ENCODE measurements at regions of chr16 and their contacts with region 1.

Region 1: GRCh38 chr16:2500918-2501750 is 12.6 kb upstream of the ATP6V0C start:
- DNase-seq: peak; percentile 84
- H3K4me3 Mint-ChIP-seq: no peak overlapping the region
- H3K27ac Mint-ChIP-seq: no peak overlapping the region
- H3K4me1 Mint-ChIP-seq: peaks cover 2% of the 10 kb centered on the region
- H3K27me3 Mint-ChIP-seq: no peaks in the 10 kb centered on the region

Region 2: DNA sequence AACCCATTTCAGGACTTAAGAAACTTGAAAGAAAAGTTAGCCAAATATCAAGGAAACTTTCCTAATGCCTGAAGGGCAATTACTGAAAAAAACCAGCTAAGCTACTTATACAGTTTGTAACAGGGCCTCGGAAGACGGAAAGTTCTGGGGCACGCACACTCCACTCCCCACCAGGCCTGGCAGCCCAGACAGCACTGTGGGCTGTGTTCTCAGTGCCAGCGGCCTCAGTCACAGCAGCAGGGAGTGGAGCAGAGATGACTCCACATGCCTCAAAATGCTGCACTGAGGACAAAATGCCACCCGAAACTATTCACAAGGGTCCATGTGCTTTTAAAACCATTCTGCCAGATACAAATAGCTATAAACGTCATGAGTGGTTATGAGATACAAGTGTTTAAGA is 243.4 kb before region 1 on chr16:
- CTCF ChIA-PET with region 1: no interaction called
- intact Hi-C with region 1: no loop called
- DNase-seq: no peak
- H3K4me3 Mint-ChIP-seq: no peak overlapping the region
- H3K27ac Mint-ChIP-seq: peak overlapping the region; percentile 41
- H3K4me1 Mint-ChIP-seq: peaks cover 7% of the 10 kb centered on the region
- H3K27me3 Mint-ChIP-seq: no peaks in the 10 kb centered on the region

Region 3: GRCh38 chr16:2340564-2341455 is 160.3 kb before region 1 on chr16 and contains the start of gene ABCA3:
- CTCF ChIA-PET with region 1: interaction called, 3 read pairs
- intact Hi-C with region 1: loop called (anchors 1 kb)
- DNase-seq: peak; percentile 95
- H3K4me3 Mint-ChIP-seq: peak within 1 kb of the TSS; percentile 85
- H3K27ac Mint-ChIP-seq: no peak within 1 kb of the TSS
- H3K4me1 Mint-ChIP-seq: peaks cover 24% of the 10 kb centered on the region
- H3K27me3 Mint-ChIP-seq: peaks cover 8% of the 10 kb centered on the region
- total RNA-seq, gene ABCA3: 2.6 to 3.1 TPM

Measured in activated naive CD4-positive, alpha-beta T cell treated with anti-CD3 and anti-CD28 coated beads for 36 hours (primary cell).